Activated T-helper 1 cell treated with anti-CD3 and anti-CD28 coated beads, Interleukin-12 subunit alpha, Interleukin-12 subunit beta, Interleukin-2, Interleukin-4 antibody, amounts not matched to agents 30 ng/mL and 10 ng/mL and 1 ng/mL, durations not matched to agents 14 hours and 24 hours and 36 hours (primary cell): ENCODE measurements at regions of chr15 and their contacts with region 1.

Region 1: GRCh38 chr15:52466134-52466701 is 62.5 kb downstream of the MYO5A start:
- DNase-seq: peak; percentile 44
- H3K4me3 Mint-ChIP-seq: no peak overlapping the region
- H3K27ac Mint-ChIP-seq: no peak overlapping the region
- H3K4me1 Mint-ChIP-seq: peaks cover 52% of the 10 kb centered on the region
- H3K27me3 Mint-ChIP-seq: no peaks in the 10 kb centered on the region

Region 2: GRCh38 chr15:52261498-52262242 is 204.5 kb before region 1 on chr15:
- intact Hi-C with region 1: loop called (anchors 2 kb)
- DNase-seq: peak; percentile 63
- H3K4me3 Mint-ChIP-seq: peak overlapping the region; percentile 68
- H3K27ac Mint-ChIP-seq: peak overlapping the region; percentile 90
- H3K4me1 Mint-ChIP-seq: peaks cover 44% of the 10 kb centered on the region
- H3K27me3 Mint-ChIP-seq: no peaks in the 10 kb centered on the region

Region 3: GRCh38 chr15:52379395-52380106 is 86.7 kb before region 1 on chr15:
- intact Hi-C with region 1: loop called (anchors 2 kb)
- DNase-seq: no peak
- H3K4me3 Mint-ChIP-seq: no peak overlapping the region
- H3K27ac Mint-ChIP-seq: peak overlapping the region; percentile 43
- H3K4me1 Mint-ChIP-seq: peaks cover 30% of the 10 kb centered on the region
- H3K27me3 Mint-ChIP-seq: no peaks in the 10 kb centered on the region

Region 4: GRCh38 chr15:52481915-52482314 is 15.7 kb after region 1 on chr15:
- intact Hi-C with region 1: loop called (anchors 2 kb)
- DNase-seq: peak; percentile 49
- H3K4me3 Mint-ChIP-seq: peak overlapping the region; percentile 49
- H3K27ac Mint-ChIP-seq: peak overlapping the region; percentile 81
- H3K4me1 Mint-ChIP-seq: peaks cover 63% of the 10 kb centered on the region
- H3K27me3 Mint-ChIP-seq: peaks cover 5% of the 10 kb centered on the region